Left cardiac atrium (tissue), 4 donors: ENCODE measurements at regions of chrX and their contacts with region 1.

Region 1: DNA sequence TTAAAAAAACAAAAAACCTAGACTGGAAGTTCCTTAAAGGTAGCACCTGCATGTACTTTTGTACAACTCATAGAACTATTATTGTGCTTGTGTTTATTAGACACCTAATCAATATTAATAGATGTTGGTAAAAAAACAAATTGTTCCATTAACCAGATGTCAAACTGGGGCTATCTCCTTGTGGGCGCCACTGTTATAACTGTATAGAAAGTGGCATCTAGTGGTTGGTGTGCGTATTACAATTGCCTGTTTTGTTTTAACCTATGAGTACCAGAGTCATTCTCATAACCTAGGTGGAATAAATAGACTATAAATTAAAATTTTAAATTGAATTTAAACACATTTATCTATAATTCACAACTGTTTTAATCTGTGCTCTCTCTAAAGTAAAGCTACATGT is 97.4 kb downstream of the COL4A5 start:
- DNase-seq: no peak
- ATAC-seq: peak in 1 of 2 donors; percentile 35

Region 2: GRCh38 chrX:108216919-108217571 is 320.0 kb before region 1 on chrX:
- intact Hi-C with region 1: loop called (anchors 10 kb)
- DNase-seq: no peak
- ATAC-seq: peak; percentile 56 to 74

Region 3: DNA sequence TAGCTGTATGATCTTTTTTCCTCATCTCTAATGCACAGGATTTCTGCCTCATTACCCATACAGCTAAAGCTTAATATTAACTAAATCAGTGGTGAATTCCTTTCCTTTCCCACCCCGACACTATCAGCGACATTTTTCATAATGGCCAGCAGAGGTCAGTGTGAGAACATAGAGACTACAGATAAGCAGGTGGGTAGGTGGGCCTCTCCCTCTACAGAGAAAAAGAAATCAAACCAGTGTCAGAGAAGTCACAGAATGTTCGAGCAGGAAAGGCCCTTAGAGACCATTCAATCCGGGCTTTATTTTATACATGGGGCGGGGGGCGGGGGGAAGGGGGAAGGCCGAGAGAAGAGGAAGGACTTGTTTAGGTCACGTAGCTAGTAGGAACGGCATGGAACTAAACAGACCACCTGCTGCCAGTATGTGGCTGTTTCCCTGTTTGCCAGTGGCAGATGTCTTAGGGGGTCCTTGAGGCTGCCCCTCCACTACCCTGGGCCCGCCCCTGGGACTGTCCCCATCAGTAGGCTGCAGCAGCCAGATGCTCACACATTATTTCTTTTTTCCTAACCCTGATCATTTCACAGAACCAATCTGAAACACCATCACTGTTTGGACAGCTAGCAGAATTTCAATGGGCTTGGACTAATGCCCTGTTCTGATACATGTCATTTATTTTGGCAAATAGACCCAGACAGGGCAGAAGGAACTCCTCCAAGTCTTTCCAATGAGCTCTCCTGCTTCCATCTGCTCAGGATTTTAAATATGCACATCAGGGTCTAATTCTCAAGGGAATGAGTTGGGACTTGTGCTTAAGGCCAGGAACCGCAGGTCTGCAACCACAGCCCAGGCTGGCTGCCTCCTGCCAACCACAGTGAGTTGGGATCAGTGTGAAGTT is 312.0 kb before region 1 on chrX:
- intact Hi-C with region 1: loop called in 1 of 2 experiments (anchors 10 kb)
- DNase-seq: no peak
- ATAC-seq: peak; percentile 53 to 63